ENCODE measurements at regions of chr5 and their contacts with region 1.

Region 1: DNA sequence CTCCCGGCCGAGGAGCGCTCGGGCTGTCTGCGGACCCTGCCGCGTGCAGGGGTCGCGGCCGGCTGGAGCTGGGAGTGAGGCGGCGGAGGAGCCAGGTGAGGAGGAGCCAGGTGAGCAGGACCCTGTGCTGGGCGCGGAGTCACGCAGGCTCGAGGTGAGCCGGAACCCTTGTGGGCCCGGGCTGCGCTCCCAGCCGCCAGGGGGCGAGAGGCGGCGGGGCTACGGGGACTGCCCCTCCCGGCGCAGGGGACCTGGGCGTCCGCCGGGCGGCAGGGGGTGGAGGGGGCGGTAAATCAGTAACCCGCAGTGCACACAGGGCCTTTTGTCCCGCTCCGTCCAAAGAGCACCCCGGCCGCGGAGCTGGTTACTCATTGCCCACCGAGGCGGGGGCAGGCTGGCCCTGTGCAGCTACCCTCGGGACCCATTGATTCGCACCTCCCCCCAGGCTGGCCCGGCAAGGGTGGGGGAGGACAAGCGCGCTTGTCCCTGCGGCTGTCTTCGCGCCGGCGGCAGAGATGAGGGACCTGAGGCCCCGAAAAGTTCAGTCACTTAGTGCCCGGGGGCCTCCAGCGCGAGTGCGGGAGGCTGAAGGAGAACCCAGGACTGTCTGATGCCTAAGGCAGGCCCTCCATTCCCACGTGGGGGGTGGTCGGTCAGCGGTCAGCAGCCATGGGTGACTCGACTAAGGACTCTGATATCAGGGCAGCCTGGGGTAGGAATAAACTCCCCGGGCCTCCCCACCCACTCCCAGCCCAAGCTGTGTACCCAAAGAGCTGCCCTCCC is 400 bp downstream of the FGFR4 start:
- DNase-seq: peak; percentile 71
- ATAC-seq: peak; percentile 82
- H3K4me3 Mint-ChIP-seq: peak overlapping the region; percentile 50
- H3K27ac Mint-ChIP-seq: no peak overlapping the region
- H3K4me1 Mint-ChIP-seq: peaks cover 19% of the 10 kb centered on the region
- H3K27me3 Mint-ChIP-seq: peaks cover 6% of the 10 kb centered on the region
- CTCF ChIP-seq: no peak

Region 2: GRCh38 chr5:176803940-176804498 is 283.1 kb before region 1 on chr5:
- CTCF ChIA-PET with region 1: no interaction called
- POLR2A ChIA-PET with region 1: no interaction called
- intact Hi-C with region 1: no loop called
- DNase-seq: no peak
- ATAC-seq: no peak
- H3K4me3 Mint-ChIP-seq: no peak overlapping the region
- H3K27ac Mint-ChIP-seq: no peak overlapping the region
- H3K4me1 Mint-ChIP-seq: no peaks in the 10 kb centered on the region
- H3K27me3 Mint-ChIP-seq: peaks cover 43% of the 10 kb centered on the region
- CTCF ChIP-seq: no peak

Region 3: GRCh38 chr5:176959051-176959450 is 128.1 kb before region 1 on chr5:
- CTCF ChIA-PET with region 1: no interaction called
- POLR2A ChIA-PET with region 1: no interaction called
- intact Hi-C with region 1: no loop called
- DNase-seq: no peak
- ATAC-seq: peak; percentile 28
- H3K4me3 Mint-ChIP-seq: no peak overlapping the region
- H3K27ac Mint-ChIP-seq: no peak overlapping the region
- H3K4me1 Mint-ChIP-seq: no peaks in the 10 kb centered on the region
- H3K27me3 Mint-ChIP-seq: no peaks in the 10 kb centered on the region
- CTCF ChIP-seq: no peak

Region 4: GRCh38 chr5:177071666-177072385 is 15.3 kb before region 1 on chr5:
- CTCF ChIA-PET with region 1: interaction called, 13 read pairs
- POLR2A ChIA-PET with region 1: interaction called, 6 read pairs
- intact Hi-C with region 1: loop called (anchors 1 kb)
- DNase-seq: peak; percentile 55
- ATAC-seq: peak; percentile 89
- H3K4me3 Mint-ChIP-seq: peak overlapping the region; percentile 61
- H3K27ac Mint-ChIP-seq: peak overlapping the region; percentile 82
- H3K4me1 Mint-ChIP-seq: peaks cover 35% of the 10 kb centered on the region
- H3K27me3 Mint-ChIP-seq: no peaks in the 10 kb centered on the region
- CTCF ChIP-seq: peak; percentile 85